Activated naive CD4-positive, alpha-beta T cell treated with anti-CD3 and anti-CD28 coated beads for 36 hours (primary cell): ENCODE measurements at regions of chr18 and their contacts with region 1.

Region 1: DNA sequence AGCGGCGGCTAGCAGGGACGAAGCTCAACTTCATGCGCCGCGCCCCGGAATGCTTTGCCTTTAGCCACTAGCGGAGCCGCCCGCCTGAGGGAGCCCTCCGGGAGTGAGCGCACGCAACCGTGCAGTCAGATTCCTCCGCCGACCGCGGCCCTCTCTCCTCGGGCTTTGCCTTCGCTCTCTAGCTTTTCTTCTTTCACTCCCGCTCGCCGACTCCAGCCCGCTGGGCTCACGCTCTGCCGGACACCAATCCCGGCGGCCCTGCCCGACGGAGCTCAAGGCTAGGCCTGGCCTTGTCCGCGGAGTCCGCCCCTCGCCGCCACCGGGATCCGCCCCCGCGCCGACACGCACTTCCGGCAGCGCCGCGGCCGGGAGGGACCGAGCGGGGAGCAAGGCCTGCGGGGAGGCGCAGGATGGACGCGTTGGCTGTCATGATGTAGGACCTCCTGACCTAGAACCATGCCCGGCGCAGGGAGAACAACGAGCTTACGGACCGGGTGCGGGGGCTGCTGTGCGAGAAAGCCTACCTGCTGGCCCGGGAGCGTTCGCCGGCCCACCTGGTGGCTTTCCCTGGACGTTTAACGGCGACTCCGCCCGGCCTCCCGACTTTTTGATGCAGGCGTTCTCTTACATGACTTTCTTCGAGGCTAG is 40.8 kb upstream of the AKAIN1 start:
- DNase-seq: peak; percentile 88
- H3K4me3 Mint-ChIP-seq: peak overlapping the region; percentile 80
- H3K27ac Mint-ChIP-seq: peak overlapping the region; percentile 94
- H3K4me1 Mint-ChIP-seq: peaks cover 43% of the 10 kb centered on the region
- H3K27me3 Mint-ChIP-seq: no peaks in the 10 kb centered on the region

Region 2: DNA sequence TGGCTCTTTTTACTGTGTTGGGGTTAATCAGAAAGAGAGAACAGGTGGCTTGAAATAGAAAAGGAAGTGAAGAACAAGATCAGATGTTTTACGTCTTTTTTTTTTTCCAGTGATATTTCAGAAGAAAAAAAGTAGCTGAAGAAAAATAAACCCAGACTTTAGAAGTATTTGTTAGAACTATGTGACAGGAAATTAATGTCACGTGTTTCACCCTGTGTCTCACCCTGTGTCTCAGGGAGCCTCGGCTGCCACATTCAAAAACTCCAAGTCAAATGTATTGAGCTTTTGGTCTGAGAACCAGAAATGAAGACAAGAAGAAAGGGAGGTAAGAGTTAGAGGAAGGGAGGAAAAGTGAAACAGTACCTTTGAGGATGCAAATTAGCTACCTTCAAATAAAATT is 78.8 kb before region 1 on chr18:
- CTCF ChIA-PET with region 1: interaction called, 6 read pairs
- intact Hi-C with region 1: loop called (anchors 1 kb)
- DNase-seq: peak; percentile 37
- H3K4me3 Mint-ChIP-seq: peak overlapping the region; percentile 41
- H3K27ac Mint-ChIP-seq: peak overlapping the region; percentile 80
- H3K4me1 Mint-ChIP-seq: peaks cover 35% of the 10 kb centered on the region
- H3K27me3 Mint-ChIP-seq: no peaks in the 10 kb centered on the region

Region 3: GRCh38 chr18:5175378-5175777 is 62.5 kb before region 1 on chr18:
- CTCF ChIA-PET with region 1: no interaction called
- intact Hi-C with region 1: no loop called
- DNase-seq: no peak
- H3K4me3 Mint-ChIP-seq: no peak overlapping the region
- H3K27ac Mint-ChIP-seq: no peak overlapping the region
- H3K4me1 Mint-ChIP-seq: peaks cover 20% of the 10 kb centered on the region
- H3K27me3 Mint-ChIP-seq: no peaks in the 10 kb centered on the region

Region 4: DNA sequence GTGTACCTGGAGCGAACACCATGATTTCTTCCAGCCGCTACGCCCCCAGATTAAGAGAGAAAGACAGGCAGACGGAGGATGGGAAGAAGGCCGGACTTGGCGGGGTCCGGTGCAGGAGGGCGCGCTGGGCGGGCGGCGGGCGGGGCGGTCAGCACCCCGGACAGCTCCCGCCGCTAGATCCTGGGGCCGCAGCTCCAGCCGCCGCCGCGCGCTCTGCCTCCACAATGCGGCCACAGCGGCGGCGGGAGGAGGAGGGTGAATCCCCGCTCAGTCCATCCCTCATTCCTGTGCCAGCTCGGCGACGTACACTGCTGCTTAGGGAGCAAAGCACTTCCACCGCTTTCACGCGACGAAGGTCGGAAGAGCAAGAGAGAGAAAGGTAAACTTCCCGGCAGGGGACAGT is 40.8 kb before region 1 on chr18 and contains the start of gene AKAIN1:
- CTCF ChIA-PET with region 1: interaction called, 3 read pairs
- intact Hi-C with region 1: loop called (anchors 1 kb)
- DNase-seq: peak; percentile 30
- H3K4me3 Mint-ChIP-seq: peak within 1 kb of the TSS; percentile 72
- H3K27ac Mint-ChIP-seq: no peak within 1 kb of the TSS
- H3K4me1 Mint-ChIP-seq: peaks cover 20% of the 10 kb centered on the region
- H3K27me3 Mint-ChIP-seq: peaks cover 58% of the 10 kb centered on the region
- total RNA-seq, gene AKAIN1: not detected

Region 5: GRCh38 chr18:5295981-5296705 is 58.3 kb after region 1 on chr18:
- CTCF ChIA-PET with region 1: interaction called, 10 read pairs
- intact Hi-C with region 1: loop called (anchors 1 kb)
- DNase-seq: peak; percentile 93
- H3K4me3 Mint-ChIP-seq: peak overlapping the region; percentile 93
- H3K27ac Mint-ChIP-seq: peak overlapping the region; percentile 94
- H3K4me1 Mint-ChIP-seq: peaks cover 22% of the 10 kb centered on the region
- H3K27me3 Mint-ChIP-seq: no peaks in the 10 kb centered on the region